Right cardiac atrium (tissue), 5 donors: ENCODE measurements at regions of chr7 and their contacts with region 1.

Region 1: DNA sequence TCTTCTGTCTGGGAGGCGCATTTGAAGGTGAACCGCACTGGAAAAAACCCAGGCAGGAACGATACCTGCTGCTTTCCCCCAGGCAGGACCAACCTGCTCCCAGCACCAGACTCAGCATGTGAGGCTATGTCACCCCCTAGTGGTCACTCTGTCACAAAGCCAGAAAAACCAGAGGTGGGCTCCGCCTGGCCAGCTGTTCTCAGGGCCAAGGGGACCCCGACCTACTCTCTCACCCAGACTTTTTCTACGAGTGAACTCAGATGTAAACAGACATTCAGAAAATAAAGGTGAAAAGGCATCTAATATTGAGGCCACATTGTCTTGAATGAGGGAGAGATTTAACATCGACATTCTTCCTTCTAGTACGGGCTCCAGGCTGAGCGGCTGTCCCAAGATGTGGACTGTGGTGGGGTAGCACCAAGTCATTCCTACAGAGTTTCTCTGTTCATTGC is 117.3 kb downstream of the PRKAG2 start:
- DNase-seq: peak in 1 of 3 donors; percentile 60
- ATAC-seq: peak; percentile 50 to 59
- H3K4me3 ChIP-seq: no peak overlapping the region
- H3K27ac ChIP-seq: no peak overlapping the region
- H3K4me1 ChIP-seq: peaks cover 2% of the 10 kb centered on the region
- H3K27me3 ChIP-seq: no peaks in the 10 kb centered on the region

Region 2: DNA sequence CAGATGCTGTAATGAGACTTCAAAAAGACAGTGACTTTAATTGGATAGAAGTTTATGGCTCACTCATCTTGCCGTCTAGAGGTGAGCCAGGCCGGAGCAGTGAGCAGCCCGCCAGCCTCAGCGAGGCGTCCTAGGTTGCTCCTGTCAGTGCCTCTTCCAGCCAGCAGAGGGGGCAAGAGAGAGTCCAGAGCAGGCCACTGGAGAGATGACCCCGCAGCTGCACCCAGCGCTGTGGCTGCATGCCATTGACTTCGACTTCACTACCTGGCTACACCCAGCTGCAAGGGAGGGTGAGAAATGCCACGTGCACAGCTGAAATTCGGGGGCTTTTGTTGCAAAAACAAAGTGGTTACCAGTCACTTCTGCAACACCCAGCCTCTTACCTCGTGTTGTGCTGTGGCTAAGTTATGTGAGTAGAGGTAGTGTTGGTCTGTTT is 391.5 kb before region 1 on chr7:
- intact Hi-C with region 1: loop called (anchors 5 to 10 kb)
- DNase-seq: peak; percentile 82 to 92 (median 89)
- ATAC-seq: peak; percentile 94 to 95
- H3K4me3 ChIP-seq: no peak overlapping the region
- H3K27ac ChIP-seq: no peak overlapping the region
- H3K4me1 ChIP-seq: peaks cover 2% of the 10 kb centered on the region
- H3K27me3 ChIP-seq: no peaks in the 10 kb centered on the region

Region 3: DNA sequence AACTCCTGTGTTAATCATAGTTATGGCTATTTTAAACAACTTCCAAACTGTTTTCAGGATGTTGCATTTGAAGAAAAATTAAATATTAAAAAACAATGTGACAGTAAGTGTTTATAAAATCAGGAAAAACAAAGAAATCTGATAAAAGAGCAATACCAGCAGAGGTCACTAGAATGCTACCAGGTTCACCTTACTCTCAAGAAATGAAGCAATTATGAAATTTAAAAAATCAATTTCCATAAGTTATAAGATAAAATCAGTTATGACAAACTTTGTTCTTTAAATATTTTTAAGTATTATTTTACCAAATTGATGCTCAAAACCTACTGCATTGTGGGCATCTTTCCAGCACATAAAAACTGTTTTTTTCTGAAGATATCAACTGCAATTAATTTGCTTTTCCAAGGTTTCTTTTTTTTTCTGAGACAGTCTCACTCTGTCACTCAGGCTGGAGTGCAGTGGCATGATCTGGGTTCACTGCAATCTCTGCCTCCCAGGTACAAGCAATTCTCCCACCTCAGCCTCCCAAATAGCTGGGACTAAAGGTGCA is 189.2 kb before region 1 on chr7:
- intact Hi-C with region 1: loop called in 2 of 4 experiments (anchors 5 to 10 kb)
- DNase-seq: no peak
- ATAC-seq: no peak
- H3K4me3 ChIP-seq: no peak overlapping the region
- H3K27ac ChIP-seq: no peak overlapping the region
- H3K4me1 ChIP-seq: no peaks in the 10 kb centered on the region
- H3K27me3 ChIP-seq: no peaks in the 10 kb centered on the region

Region 4: GRCh38 chr7:151711906-151712809 is 47.5 kb before region 1 on chr7:
- intact Hi-C with region 1: no loop called
- DNase-seq: peak in 1 of 3 donors; percentile 76
- ATAC-seq: peak; percentile 23 to 58
- H3K4me3 ChIP-seq: no peak overlapping the region
- H3K27ac ChIP-seq: peak overlapping the region; percentile 57
- H3K4me1 ChIP-seq: peaks cover 4% of the 10 kb centered on the region
- H3K27me3 ChIP-seq: no peaks in the 10 kb centered on the region

Region 5: DNA sequence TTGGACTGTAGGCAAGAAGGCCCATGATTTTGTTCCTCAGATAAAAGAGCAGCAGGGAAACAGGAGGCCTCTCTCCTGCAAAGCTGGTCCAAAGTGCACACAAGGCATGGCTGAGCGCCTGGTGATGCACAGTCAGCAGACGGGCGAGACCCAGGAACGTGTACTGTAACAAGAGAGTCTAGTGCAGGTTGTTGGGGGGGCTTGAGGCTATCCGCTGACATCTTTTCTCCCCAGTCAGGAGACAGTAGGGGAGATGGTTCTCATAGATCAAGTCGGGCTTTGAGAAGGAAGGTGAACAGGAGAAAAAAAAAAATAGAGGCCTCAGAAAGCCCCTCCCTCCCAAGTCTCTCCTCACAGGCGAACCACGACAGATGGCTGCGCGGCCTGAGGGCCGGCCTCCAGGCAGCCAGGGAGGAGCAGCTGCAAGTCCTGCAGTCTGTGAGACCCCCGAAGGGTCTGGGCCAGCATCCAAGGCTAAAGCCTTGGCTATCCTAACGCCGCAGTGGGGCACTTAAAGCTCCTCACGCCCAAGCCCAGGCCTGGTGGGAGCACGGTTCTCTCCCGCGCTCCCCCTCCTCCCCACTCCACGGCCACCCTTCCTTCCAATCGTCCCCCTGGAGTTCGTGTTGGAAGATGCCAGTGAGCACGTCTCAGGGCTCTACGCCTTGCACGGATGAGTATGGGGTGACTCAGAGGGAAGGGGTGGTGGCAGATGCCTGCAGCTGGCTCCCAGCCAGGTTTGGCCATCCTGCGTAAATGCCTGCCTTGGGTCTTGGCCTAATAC is 49.0 kb after region 1 on chr7:
- intact Hi-C with region 1: no loop called
- DNase-seq: no peak
- ATAC-seq: peak in 1 of 2 donors; percentile 32
- H3K4me3 ChIP-seq: no peak overlapping the region
- H3K27ac ChIP-seq: no peak overlapping the region
- H3K4me1 ChIP-seq: no peaks in the 10 kb centered on the region
- H3K27me3 ChIP-seq: no peaks in the 10 kb centered on the region

Region 6: GRCh38 chr7:151968357-151968756 is 208.7 kb after region 1 on chr7:
- intact Hi-C with region 1: no loop called
- DNase-seq: peak; percentile 72 to 87 (median 75)
- ATAC-seq: peak; percentile 91 to 94
- H3K4me3 ChIP-seq: no peak overlapping the region
- H3K27ac ChIP-seq: no peak overlapping the region
- H3K4me1 ChIP-seq: no peaks in the 10 kb centered on the region
- H3K27me3 ChIP-seq: no peaks in the 10 kb centered on the region